Activated naive CD4-positive, alpha-beta T cell treated with anti-CD3 and anti-CD28 coated beads, Interleukin-2, amount 10 ng/mL, durations not matched to agents 7 days and 5 days (primary cell): ENCODE measurements at regions of chr7 and their contacts with region 1.

Region 1: DNA sequence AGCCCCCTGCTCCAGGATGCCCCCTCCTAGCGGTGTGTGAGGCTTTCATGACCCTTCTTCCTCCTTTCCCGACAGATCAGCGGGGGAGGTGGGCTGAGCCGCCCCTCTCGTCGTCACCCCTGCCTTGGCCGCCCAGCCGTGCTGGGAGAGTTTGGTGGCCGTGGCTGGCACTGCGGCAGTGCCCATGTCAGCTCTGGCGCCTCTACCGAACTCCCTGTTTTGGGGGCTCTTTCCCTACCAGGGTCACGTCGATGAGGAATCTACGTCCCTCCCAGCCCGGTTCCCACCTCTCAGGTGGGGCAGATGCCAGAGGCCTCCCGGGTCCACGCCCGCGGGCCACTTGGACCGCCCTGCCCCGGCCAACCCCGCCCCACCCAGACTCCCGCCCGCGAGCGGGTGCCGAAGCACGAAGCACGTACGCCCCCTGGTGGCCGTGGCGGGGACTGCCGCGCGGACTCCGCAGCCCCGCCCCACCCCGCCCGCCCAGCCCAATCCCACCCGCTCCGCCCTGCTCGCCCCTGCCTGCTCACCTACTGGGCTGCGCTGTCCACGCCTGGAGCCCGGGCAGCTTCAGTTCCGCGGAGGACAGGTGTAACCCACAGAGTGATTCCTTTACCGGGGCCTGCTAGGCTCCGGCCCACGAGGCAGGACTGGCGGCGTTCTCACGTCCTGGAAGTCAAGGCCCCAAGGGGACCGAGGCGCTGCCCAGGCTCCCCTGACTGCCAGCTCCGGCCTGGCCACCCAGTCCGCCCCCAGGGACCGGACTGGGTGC is 127.1 kb downstream of the UBE2H start:
- DNase-seq: peak; percentile 92
- H3K4me3 Mint-ChIP-seq: peak overlapping the region; percentile 90
- H3K27ac Mint-ChIP-seq: peak overlapping the region; percentile 76
- H3K4me1 Mint-ChIP-seq: peaks cover 23% of the 10 kb centered on the region
- H3K27me3 Mint-ChIP-seq: peaks cover 25% of the 10 kb centered on the region

Region 2: DNA sequence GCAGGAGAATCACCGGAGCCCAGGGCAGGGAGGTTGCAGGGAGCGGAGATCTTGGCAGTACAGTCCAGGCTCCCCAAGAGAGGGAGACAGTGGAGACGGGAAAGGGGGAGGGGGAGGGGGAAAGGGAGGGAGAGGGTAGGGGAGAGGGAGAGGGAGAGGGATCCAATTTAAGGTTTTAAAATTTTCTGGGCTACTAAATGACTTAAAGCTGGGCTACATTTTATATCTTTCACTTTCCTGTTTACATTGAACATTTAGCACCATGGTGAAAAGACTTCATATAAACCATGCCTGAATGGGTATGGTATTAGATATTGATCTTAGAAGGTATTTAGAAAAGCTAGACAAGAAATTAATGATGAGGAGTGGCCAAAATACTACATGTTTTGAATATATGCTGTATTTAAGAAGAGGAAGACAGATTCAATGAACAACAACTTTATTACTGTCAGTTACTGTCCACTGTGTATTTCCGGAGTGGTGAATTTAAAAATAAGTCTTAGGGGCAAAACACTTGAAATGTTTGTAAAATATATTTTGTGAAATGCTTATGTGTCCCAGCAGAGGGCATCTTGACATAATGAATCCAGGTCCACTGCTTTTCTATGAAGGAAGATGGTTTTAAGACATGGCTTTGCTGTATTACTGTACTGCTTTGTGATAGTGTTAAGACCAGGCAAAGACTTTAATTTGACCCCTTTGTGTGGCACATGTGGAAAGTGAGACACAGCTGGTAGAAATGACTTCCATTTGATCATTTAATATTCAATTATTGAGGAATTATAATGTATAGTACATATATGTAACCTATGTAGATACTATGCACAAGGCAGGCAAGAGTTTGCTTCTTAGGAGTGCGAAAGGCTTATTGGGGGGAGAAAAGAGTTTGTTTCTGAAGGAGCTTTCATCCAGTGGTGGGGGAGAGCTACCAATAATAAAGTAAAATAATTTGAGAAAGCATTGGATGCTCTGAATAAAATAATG is 161.4 kb before region 1 on chr7:
- CTCF ChIA-PET with region 1: interaction called, 27 read pairs
- DNase-seq: no peak
- H3K4me3 Mint-ChIP-seq: no peak overlapping the region
- H3K27ac Mint-ChIP-seq: no peak overlapping the region
- H3K4me1 Mint-ChIP-seq: no peaks in the 10 kb centered on the region
- H3K27me3 Mint-ChIP-seq: no peaks in the 10 kb centered on the region

Region 3: GRCh38 chr7:129864042-129864441 is 38.4 kb after region 1 on chr7:
- CTCF ChIA-PET with region 1: no interaction called
- DNase-seq: no peak
- H3K4me3 Mint-ChIP-seq: no peak overlapping the region
- H3K27ac Mint-ChIP-seq: no peak overlapping the region
- H3K4me1 Mint-ChIP-seq: peaks cover 26% of the 10 kb centered on the region
- H3K27me3 Mint-ChIP-seq: no peaks in the 10 kb centered on the region

Region 4: DNA sequence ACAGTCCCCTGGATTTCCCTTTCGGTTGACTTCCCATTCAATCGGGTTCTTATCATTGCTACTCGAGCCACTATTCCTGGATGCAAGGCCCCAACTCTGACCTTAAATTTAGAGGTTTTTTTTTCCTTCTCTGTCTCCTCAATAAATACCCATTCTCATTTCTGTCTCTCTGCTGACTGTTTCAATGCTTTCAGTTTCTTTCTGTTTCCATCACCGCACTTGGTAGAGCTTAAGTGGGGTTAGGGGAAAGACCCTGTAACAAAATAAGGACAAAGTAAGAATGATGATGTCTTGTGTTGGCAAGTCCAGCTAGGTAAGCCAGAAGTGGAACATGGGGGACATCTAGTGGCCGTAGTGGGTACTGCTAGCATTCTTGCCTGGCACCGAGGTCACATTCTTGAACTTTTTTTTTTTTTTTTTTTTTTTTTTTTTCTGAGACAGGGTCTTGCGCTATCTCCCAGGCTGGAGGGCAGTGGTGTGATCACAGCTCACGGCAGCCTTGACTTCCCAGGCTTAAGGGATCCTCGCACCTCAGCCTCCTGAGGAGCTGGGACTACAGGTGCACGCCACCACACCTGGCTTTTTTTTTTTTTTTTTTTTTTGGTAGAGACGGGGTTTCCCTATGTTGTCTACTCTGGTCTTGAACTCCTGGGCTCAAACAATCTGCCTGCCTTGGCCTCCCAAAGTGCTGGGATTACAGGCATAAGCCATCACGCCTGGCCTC is 185.2 kb after region 1 on chr7:
- CTCF ChIA-PET with region 1: interaction called, 135 read pairs
- DNase-seq: peak; percentile 91
- H3K4me3 Mint-ChIP-seq: no peak overlapping the region
- H3K27ac Mint-ChIP-seq: no peak overlapping the region
- H3K4me1 Mint-ChIP-seq: peaks cover 8% of the 10 kb centered on the region
- H3K27me3 Mint-ChIP-seq: peaks cover 5% of the 10 kb centered on the region